Transverse colon (tissue), 4 donors: ENCODE measurements at regions of chr13 and their contacts with region 1.

Region 1: GRCh38 chr13:30832845-30833332 is 73.2 kb upstream of the MEDAG start:
- DNase-seq: peak; percentile 94
- H3K4me3 ChIP-seq: no peak overlapping the region
- H3K27ac ChIP-seq: peak overlapping the region; percentile 53 to 70 (median 60)
- H3K4me1 ChIP-seq: peaks cover 5 to 38% (median 23%) of the 10 kb centered on the region in 4 donors
- H3K27me3 ChIP-seq: no peaks in the 10 kb centered on the region
- CTCF ChIP-seq: no peak
- EP300 ChIP-seq: no peak
- POLR2A ChIP-seq: no peak

Region 2: DNA sequence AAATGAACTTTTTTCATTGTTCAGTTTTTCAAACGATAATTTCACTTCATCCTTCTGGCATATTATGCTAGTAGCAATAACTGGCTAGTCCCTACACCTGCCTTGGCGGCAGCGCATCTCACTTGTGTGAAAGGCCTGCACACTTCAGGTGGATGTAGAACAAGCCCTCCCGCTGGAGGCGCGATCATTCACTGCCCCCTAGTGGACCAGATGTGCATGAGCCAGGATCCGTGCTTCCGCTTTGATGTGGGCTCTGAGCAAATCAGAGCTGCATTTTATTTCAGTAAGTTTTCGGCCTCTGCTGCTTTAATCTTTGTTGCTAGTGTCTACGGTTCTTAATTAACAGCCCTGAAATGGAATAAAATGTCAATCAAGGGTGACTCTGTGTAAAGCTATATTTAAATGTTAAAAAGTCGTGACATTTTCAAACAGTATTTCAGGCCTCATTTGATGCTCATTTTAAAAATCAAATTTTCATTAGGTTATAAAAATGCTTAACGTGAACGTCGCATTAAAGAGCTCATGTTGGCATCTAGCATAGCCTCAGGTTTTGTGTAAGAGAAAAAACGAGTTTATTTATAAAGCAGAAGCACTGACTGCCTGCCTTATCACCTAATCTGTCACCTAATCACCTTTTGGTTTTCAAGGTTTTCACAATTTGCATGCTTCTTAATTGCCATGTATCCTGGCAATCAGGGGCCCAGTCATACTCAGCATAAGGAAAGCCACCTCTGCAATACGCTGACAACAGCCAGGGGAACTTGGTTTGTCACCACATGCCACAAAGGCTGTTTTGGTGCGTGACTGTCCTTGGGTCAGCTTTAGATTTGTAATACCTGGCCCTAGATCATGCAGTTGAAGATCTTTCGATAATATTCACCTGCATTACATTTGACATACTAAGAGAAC is 211.7 kb after region 1 on chr13:
- in situ Hi-C with region 1: loop called in 1 of 4 experiments (anchors 25 kb)
- intact Hi-C with region 1: no loop called
- DNase-seq: peak; percentile 87
- H3K4me3 ChIP-seq: no peak overlapping the region
- H3K27ac ChIP-seq: peak overlapping the region; percentile 80 to 84 (median 80)
- H3K4me1 ChIP-seq: peaks cover 12 to 36% (median 30%) of the 10 kb centered on the region in 4 donors
- H3K27me3 ChIP-seq: no peaks in the 10 kb centered on the region
- CTCF ChIP-seq: peak; percentile 93 to 97 (median 95)
- EP300 ChIP-seq: no peak
- POLR2A ChIP-seq: no peak